Testis (tissue), 5 donors: ENCODE measurements at regions of chr7 and their contacts with region 1.

Region 1: DNA sequence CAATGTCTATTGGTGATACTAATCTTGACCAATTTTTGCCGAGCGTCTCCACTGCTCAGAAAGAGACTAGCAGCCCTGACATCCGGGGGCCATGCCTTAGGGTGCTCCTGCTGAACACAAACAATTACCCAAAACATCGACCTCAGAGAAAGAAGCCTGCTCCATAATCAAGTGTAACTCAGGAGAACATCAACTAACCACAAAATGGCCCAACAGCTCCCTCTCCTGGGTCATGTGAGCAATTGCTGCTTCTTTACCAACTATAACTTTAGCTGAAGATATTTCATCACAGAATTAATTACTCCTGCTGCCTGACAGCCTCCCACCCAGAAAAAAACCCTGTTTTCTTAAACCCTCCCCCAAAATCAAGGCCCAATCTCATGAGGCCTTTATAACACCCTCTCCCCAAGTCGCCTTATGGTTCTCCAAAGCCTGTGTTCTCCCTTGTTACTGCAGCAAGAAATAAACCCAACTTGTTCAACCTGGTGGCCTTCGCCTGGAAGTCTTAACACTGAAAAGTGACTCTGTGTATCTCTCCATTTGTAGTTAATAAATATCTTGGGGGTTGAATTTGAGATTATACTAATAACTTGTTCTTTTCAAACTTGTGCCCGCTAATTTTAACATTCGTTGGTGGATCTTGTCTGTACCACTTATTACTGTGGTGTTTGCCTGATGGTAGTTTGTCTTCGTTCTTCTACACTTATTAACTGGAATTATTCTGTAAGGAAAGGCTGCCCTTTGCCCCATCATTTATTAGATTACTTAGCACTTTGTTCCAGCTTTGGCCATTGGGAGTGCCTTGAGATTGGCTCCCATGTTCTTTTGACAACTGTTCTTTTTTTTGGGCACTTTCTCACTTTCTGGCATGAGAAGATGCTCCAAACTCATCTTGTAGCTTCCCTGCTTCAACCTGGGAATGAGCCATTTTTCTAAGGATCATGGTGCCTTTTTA is 21.2 kb upstream of the RAMP3 start:
- DNase-seq: peak; percentile 64
- H3K4me3 ChIP-seq: no peak overlapping the region
- H3K27ac ChIP-seq: no peak overlapping the region
- H3K4me1 ChIP-seq: no peaks in the 10 kb centered on the region
- H3K27me3 ChIP-seq: no peaks in the 10 kb centered on the region
- CTCF ChIP-seq: peak; percentile 68 to 90 (median 83)
- POLR2A ChIP-seq: no peak

Region 2: DNA sequence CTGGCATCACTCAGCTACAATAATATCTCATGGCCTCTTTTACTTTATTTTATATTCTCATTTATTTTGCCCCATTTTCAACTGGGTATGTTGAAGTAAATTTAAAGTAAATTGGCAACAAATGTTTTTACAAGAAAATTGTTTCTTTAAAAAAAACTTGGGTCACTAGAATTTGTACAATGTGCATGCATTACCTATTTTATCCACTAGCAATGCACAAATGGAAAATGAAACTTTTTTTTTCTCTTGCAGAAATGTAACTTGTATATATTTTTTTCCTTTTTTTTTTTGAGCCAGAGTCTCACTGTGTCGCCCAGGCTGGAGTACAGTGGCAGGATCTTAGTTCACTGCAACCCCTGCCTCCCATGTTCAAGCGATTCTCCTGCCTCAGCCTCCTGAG is 278.2 kb before region 1 on chr7:
- intact Hi-C with region 1: loop called (anchors 10 kb)
- DNase-seq: no peak
- H3K4me3 ChIP-seq: no peak overlapping the region
- H3K27ac ChIP-seq: no peak overlapping the region
- H3K4me1 ChIP-seq: no peaks in the 10 kb centered on the region
- H3K27me3 ChIP-seq: no peaks in the 10 kb centered on the region
- CTCF ChIP-seq: peak in 2 of 3 experiments; percentile 16 to 54
- POLR2A ChIP-seq: no peak

Region 3: DNA sequence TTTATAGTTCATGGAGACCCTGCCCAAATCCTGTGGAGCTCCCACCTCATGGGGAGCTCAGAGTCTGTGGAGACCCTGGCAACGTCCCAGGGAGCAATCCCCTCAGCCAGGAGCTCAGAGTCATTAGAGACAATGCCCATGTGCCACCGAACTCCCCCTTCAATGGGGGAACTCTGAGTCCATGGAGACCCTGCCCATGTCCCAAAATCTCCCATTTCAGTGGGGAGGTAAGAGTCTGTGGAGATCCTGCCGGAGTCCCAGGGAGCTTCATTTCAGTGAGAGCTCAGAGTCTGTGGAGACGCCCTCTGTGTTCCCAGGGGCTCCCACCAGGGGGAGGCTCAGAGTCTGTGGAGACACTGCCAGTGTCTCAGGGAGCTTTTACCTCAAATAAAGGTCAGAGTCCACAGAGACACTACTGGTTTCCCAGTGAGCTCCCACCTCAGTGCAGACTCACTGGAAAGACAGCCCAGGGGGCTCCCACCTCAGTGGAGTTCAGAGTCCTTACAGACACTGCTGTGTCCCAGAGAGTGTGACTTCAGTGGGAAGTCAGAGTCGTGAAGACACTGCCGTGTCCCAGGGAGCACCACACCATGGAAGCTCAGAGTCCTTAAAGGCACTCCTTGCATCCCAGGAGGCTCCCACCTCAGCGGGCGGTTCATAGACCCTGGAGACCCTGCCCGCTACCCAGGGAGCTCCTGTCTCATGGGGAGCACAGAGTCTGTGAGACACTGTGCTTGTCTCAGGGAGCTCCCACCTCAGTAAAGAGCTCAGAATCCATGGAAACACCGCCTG is 162.6 kb before region 1 on chr7:
- intact Hi-C with region 1: loop called (anchors 10 kb)
- DNase-seq: peak; percentile 78
- H3K4me3 ChIP-seq: no peak overlapping the region
- H3K27ac ChIP-seq: no peak overlapping the region
- H3K4me1 ChIP-seq: no peaks in the 10 kb centered on the region
- H3K27me3 ChIP-seq: no peaks in the 10 kb centered on the region
- CTCF ChIP-seq: peak; percentile 32 to 52 (median 49)
- POLR2A ChIP-seq: no peak

Region 4: GRCh38 chr7:45026984-45027773 is 109.2 kb before region 1 on chr7:
- intact Hi-C with region 1: no loop called
- DNase-seq: no peak
- H3K4me3 ChIP-seq: no peak overlapping the region
- H3K27ac ChIP-seq: no peak overlapping the region
- H3K4me1 ChIP-seq: no peaks in the 10 kb centered on the region
- H3K27me3 ChIP-seq: no peaks in the 10 kb centered on the region
- CTCF ChIP-seq: no peak
- POLR2A ChIP-seq: no peak

Region 5: GRCh38 chr7:45037876-45038275 is 98.5 kb before region 1 on chr7:
- intact Hi-C with region 1: no loop called
- DNase-seq: no peak
- H3K4me3 ChIP-seq: no peak overlapping the region
- H3K27ac ChIP-seq: no peak overlapping the region
- H3K4me1 ChIP-seq: no peaks in the 10 kb centered on the region
- H3K27me3 ChIP-seq: no peaks in the 10 kb centered on the region
- CTCF ChIP-seq: no peak
- POLR2A ChIP-seq: no peak